Activated B cell treated with CpG ODN at 0.5 μM for 24 hours (primary cell): ENCODE measurements at regions of chr1 and their contacts with region 1.

Region 1: DNA sequence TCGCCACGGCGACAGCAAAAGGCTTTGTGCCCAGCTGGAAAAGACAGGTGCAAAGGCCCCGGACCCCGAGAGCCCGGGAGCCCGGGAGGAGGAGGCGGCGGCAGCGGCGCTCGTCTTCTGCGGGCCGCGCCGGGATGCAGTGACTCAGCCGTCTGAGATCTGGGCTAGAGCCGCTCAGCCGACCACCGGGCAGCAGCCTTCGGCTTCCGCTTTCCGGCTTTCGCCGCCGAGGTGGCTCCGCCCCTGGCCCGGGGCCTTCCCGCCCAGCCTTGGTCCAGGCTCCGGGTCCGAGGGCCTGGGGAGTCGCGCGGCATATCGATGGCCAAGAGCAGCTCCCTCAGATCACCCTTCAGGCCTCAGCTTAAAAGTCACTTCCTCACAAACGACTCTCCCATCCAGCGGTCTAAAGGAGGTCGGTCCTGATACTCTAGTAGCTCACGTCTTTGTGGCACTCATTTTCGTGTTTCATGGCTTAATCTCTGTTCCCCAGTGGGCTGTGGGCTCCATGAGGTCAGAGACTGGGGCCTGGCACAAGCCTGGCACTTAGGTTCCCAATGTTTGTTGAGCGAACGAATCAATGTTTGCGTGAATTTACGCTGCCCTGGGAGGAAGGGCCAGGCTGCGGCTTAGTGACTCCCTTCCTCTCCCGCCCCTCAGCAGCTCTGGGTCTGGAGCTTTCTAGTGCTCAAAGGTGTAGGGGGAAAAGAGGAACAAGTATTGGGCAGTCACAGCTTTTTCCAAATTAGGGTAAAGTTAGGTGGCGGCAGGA is at the start of gene PHTF1:
- DNase-seq: peak; percentile 73
- ATAC-seq: peak; percentile 88
- H3K4me3 Mint-ChIP-seq: peak within 1 kb of the TSS; percentile 94
- H3K27ac Mint-ChIP-seq: peak within 1 kb of the TSS; percentile 98
- H3K4me1 Mint-ChIP-seq: peaks cover 21% of the 10 kb centered on the region
- H3K27me3 Mint-ChIP-seq: no peaks in the 10 kb centered on the region
- CTCF ChIP-seq: no peak
- total RNA-seq, gene PHTF1: 19.2 and 25.0 TPM in 2 replicates

Region 2: DNA sequence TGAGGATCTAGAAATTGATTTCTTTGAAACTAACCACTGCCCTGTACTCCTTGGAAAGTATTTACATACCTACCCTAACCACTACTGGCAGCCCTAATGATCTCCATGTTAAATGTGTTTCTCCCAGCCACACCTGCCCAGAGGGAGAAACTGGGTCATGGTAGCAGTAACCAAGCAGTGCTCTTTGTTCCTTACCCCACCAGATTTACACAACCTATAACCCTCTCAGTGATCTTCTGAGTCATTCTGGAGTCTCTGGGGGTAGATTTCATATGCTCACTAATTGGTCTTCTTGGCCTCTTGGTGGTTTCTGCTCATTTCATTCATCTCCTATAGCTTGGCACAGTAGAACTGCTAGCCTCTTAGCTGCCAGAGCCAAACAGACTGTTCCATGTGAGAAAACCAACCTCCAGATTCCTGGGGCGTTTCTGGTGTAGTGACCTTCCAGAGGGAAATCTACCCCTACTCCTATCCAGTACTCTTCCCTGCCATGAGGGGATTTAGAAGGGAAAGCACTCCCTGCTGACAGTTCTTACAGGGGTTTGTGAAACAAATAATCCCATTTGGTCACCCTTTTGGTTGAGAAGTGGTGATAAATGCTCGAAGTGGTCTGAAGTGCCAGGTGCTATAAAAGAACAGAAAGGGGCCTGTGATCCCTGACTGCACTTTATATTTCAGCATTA is 722.7 kb before region 1 on chr1:
- CTCF ChIA-PET with region 1: no interaction called
- POLR2A ChIA-PET with region 1: no interaction called
- intact Hi-C with region 1: no loop called
- DNase-seq: no peak
- ATAC-seq: no peak
- H3K4me3 Mint-ChIP-seq: no peak overlapping the region
- H3K27ac Mint-ChIP-seq: no peak overlapping the region
- H3K4me1 Mint-ChIP-seq: peaks cover 11% of the 10 kb centered on the region
- H3K27me3 Mint-ChIP-seq: no peaks in the 10 kb centered on the region
- CTCF ChIP-seq: no peak

Region 3: GRCh38 chr1:113389953-113390834 is 369.3 kb before region 1 on chr1 and contains the start of gene MAGI3:
- CTCF ChIA-PET with region 1: no interaction called
- POLR2A ChIA-PET with region 1: interaction called, 4 read pairs
- intact Hi-C with region 1: loop called (anchors 5 kb)
- DNase-seq: peak; percentile 83
- ATAC-seq: peak; percentile 98
- H3K4me3 Mint-ChIP-seq: peak within 1 kb of the TSS; percentile 95
- H3K27ac Mint-ChIP-seq: peak within 1 kb of the TSS; percentile 77
- H3K4me1 Mint-ChIP-seq: peaks cover 18% of the 10 kb centered on the region
- H3K27me3 Mint-ChIP-seq: peaks cover 29% of the 10 kb centered on the region
- CTCF ChIP-seq: no peak
- total RNA-seq, gene MAGI3: 0.83 and 1.0 TPM in 2 replicates

Region 4: GRCh38 chr1:113821916-113822315 is 62.4 kb after region 1 on chr1:
- CTCF ChIA-PET with region 1: no interaction called
- POLR2A ChIA-PET with region 1: no interaction called
- intact Hi-C with region 1: no loop called
- DNase-seq: no peak
- ATAC-seq: no peak
- H3K4me3 Mint-ChIP-seq: no peak overlapping the region
- H3K27ac Mint-ChIP-seq: no peak overlapping the region
- H3K4me1 Mint-ChIP-seq: no peaks in the 10 kb centered on the region
- H3K27me3 Mint-ChIP-seq: no peaks in the 10 kb centered on the region
- CTCF ChIP-seq: no peak

Region 5: GRCh38 chr1:113859478-113860175 is 100.1 kb after region 1 on chr1:
- CTCF ChIA-PET with region 1: no interaction called
- POLR2A ChIA-PET with region 1: interaction called, 18 read pairs
- intact Hi-C with region 1: no loop called
- DNase-seq: no peak
- ATAC-seq: peak; percentile 84
- H3K4me3 Mint-ChIP-seq: peak overlapping the region; percentile 51
- H3K27ac Mint-ChIP-seq: peak overlapping the region; percentile 95
- H3K4me1 Mint-ChIP-seq: peaks cover 66% of the 10 kb centered on the region
- H3K27me3 Mint-ChIP-seq: no peaks in the 10 kb centered on the region
- CTCF ChIP-seq: no peak

Region 6: GRCh38 chr1:113904674-113905434 is 145.3 kb after region 1 on chr1 and contains the starts of genes AP4B1 and DCLRE1B:
- CTCF ChIA-PET with region 1: no interaction called
- POLR2A ChIA-PET with region 1: interaction called, 6 read pairs
- intact Hi-C with region 1: loop called (anchors 1 kb)
- DNase-seq: peak; percentile 89
- ATAC-seq: peak; percentile 91
- H3K4me3 Mint-ChIP-seq: peak within 1 kb of the TSS; percentile 94
- H3K27ac Mint-ChIP-seq: peak within 1 kb of the TSS; percentile 95
- H3K4me1 Mint-ChIP-seq: peaks cover 51% of the 10 kb centered on the region
- H3K27me3 Mint-ChIP-seq: no peaks in the 10 kb centered on the region
- CTCF ChIP-seq: no peak
- total RNA-seq, gene AP4B1: 48.5 and 69.9 TPM in 2 replicates
- total RNA-seq, gene DCLRE1B: 5.4 and 6.0 TPM in 2 replicates

Region 7: GRCh38 chr1:114670083-114671010 is 910.8 kb after region 1 on chr1:
- CTCF ChIA-PET with region 1: no interaction called
- POLR2A ChIA-PET with region 1: interaction called, 3 read pairs
- intact Hi-C with region 1: loop called (anchors 1 kb)
- DNase-seq: peak; percentile 80
- ATAC-seq: peak; percentile 99
- H3K4me3 Mint-ChIP-seq: peak overlapping the region; percentile 94
- H3K27ac Mint-ChIP-seq: peak overlapping the region; percentile 67
- H3K4me1 Mint-ChIP-seq: peaks cover 10% of the 10 kb centered on the region
- H3K27me3 Mint-ChIP-seq: peaks cover 30% of the 10 kb centered on the region
- CTCF ChIP-seq: no peak